Caco-2 (cell line): ENCODE measurements at regions of chr7 and their contacts with region 1.

Region 1: GRCh38 chr7:16465469-16466361 is at the start of gene SOSTDC1:
- DNase-seq: peak in 1 of 2 experiments; percentile 54
- H3K4me3 ChIP-seq: peak within 1 kb of the TSS; percentile 29
- H3K4me3 Mint-ChIP-seq: peak within 1 kb of the TSS; percentile 77
- H3K27ac Mint-ChIP-seq: peak within 1 kb of the TSS; percentile 58
- H3K4me1 ChIP-seq: peaks cover 16% of the 10 kb centered on the region
- H3K4me1 Mint-ChIP-seq: peaks cover 17% of the 10 kb centered on the region
- H3K27me3 ChIP-seq: no peaks in the 10 kb centered on the region
- H3K27me3 Mint-ChIP-seq: no peaks in the 10 kb centered on the region
- CTCF ChIP-seq: no peak
- total RNA-seq, gene SOSTDC1: 8.1 and 8.4 TPM in 2 replicates

Region 2: DNA sequence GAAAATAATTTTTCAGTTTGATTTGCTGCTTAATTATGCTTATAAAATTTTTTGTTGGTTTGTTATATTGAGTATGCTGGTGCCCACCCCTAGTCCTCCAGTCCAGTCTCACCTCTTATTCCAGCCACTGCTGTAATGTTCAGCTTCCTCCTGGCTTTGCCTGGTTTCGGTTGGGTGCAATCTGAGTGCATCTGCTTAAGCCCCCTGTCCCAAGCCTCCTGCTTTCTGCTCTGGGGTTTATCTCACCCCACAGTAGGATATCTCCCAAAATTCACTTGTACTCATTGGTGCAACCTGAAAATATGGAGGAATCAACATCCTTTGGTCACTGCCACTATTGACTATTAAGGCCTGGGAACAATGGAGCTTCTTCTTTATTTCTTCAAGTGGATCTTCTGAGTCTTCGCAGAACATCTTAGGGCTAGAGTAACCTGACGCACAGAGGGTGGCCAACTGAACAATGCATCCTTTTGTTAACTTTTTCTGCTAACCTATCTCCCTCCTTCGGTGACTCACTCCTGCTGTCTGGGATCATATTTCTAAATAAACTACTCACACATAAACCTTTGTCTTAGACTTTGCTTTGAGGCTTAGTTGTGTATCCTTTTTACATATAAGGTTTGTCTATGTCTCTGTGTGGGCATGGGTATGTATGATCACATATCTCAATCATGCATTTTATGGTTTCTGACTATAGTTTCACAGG is 18.9 kb after region 1 on chr7:
- CTCF ChIA-PET with region 1: interaction called, 12 read pairs
- POLR2A ChIA-PET with region 1: no interaction called
- intact Hi-C with region 1: no loop called
- DNase-seq: peak; percentile 15 to 50
- H3K4me3 ChIP-seq: no peak overlapping the region
- H3K4me3 Mint-ChIP-seq: no peak overlapping the region
- H3K27ac Mint-ChIP-seq: peak overlapping the region; percentile 42
- H3K4me1 ChIP-seq: peaks cover 17% of the 10 kb centered on the region
- H3K4me1 Mint-ChIP-seq: peaks cover 16% of the 10 kb centered on the region
- H3K27me3 ChIP-seq: no peaks in the 10 kb centered on the region
- H3K27me3 Mint-ChIP-seq: no peaks in the 10 kb centered on the region
- CTCF ChIP-seq: no peak

Region 3: DNA sequence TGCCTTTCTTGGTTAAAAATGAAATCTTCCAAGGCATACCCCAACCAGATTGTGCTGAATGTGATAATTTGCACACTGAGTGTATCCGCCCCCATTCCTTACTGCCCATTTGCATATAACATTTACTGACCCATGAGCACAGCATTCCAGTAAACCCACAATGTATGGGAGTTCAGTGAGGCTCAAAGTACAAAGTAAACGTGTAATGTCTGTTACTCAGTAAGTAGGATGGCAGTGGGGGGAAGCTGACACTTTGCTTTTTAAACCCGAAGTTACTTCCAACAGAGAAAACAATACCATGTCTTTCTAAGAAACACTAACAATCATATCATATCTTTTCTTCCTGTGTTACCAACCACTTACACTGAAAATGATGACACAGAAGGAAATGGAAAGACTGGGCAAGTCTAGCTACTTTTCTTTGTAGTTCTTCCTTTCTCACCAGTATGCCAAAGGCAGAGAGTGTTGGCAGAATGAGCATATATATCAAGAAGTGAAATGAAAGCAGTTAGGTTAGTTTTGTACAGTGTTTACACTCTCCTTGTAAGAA is 26.9 kb after region 1 on chr7:
- CTCF ChIA-PET with region 1: interaction called, 12 read pairs
- POLR2A ChIA-PET with region 1: interaction called, 5 read pairs
- intact Hi-C with region 1: loop called (anchors 1 kb)
- DNase-seq: peak; percentile 49 to 61
- H3K4me3 ChIP-seq: no peak overlapping the region
- H3K4me3 Mint-ChIP-seq: peak overlapping the region; percentile 37
- H3K27ac Mint-ChIP-seq: peak overlapping the region; percentile 69
- H3K4me1 ChIP-seq: peaks cover 40% of the 10 kb centered on the region
- H3K4me1 Mint-ChIP-seq: peaks cover 31% of the 10 kb centered on the region
- H3K27me3 ChIP-seq: no peaks in the 10 kb centered on the region
- H3K27me3 Mint-ChIP-seq: no peaks in the 10 kb centered on the region
- CTCF ChIP-seq: no peak

Region 4: DNA sequence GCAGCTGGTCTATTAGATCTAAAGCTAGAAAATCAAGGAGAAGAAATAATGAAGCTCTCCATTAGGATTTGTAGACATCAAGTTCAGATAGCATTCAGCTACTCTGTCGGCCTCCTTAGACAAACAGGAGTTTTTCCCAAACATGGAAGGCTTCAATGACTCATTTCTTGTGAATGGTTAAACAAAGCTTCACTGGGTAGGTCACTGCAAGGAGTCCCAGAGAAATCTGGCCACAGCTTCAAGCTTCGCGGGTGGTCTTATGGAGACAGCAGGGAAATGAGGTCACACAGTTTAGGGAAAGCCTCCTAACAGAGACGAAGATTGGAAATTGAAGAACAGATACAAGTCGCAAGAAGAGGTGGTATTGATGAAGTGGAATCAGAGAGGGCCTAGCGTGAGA is 38.3 kb after region 1 on chr7:
- CTCF ChIA-PET with region 1: no interaction called
- POLR2A ChIA-PET with region 1: no interaction called
- intact Hi-C with region 1: no loop called
- DNase-seq: no peak
- H3K4me3 ChIP-seq: no peak overlapping the region
- H3K4me3 Mint-ChIP-seq: no peak overlapping the region
- H3K27ac Mint-ChIP-seq: peak overlapping the region; percentile 5
- H3K4me1 ChIP-seq: peaks cover 11% of the 10 kb centered on the region; the same call in 1 of the 2 replicates
- H3K4me1 Mint-ChIP-seq: peaks cover 7% of the 10 kb centered on the region
- H3K27me3 ChIP-seq: no peaks in the 10 kb centered on the region
- H3K27me3 Mint-ChIP-seq: no peaks in the 10 kb centered on the region
- CTCF ChIP-seq: no peak

Region 5: GRCh38 chr7:16531707-16532106 is 66.0 kb after region 1 on chr7:
- CTCF ChIA-PET with region 1: no interaction called
- POLR2A ChIA-PET with region 1: no interaction called
- intact Hi-C with region 1: loop called (anchors 2 kb)
- DNase-seq: no peak
- H3K4me3 ChIP-seq: no peak overlapping the region
- H3K4me3 Mint-ChIP-seq: no peak overlapping the region
- H3K27ac Mint-ChIP-seq: peak overlapping the region; percentile 29
- H3K4me1 ChIP-seq: peaks cover 16% of the 10 kb centered on the region
- H3K4me1 Mint-ChIP-seq: peaks cover 25% of the 10 kb centered on the region
- H3K27me3 ChIP-seq: no peaks in the 10 kb centered on the region
- H3K27me3 Mint-ChIP-seq: no peaks in the 10 kb centered on the region
- CTCF ChIP-seq: no peak